K562 (cell line): ENCODE measurements at regions of chr14 and their contacts with region 1.

Region 1: DNA sequence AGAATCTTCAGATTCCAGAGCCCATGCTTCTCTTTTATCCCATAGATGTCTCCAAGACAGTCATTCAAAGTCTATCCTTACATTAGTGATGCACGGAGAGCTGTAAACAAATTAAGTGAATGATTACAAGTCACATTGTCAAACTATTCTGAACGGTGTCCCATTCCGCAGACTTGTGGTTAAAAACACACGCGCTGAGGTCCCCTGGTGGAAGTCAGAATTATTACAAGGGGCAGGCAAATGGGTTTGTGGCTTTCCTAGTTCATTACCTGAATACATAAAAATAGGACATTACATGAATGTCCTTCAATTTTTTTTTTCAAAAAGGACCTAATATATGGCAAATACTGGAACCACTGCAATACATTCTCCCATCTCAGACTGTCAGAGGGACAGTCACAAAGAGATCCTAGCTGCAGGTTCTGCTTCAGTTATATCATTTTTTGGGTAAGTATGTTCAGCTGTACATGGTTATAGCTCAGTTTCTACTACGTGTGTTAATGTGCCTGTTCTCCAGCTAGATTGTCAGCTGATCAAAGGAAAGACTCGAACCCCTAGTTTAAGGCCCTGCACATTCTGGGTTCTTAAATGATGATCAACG is 53.1 kb upstream of the STON2 start:
- DNase-seq: peak; percentile 38 to 70 (median 45)
- ATAC-seq: peak; percentile 82
- H3K4me3 ChIP-seq: no peak overlapping the region
- H3K27ac ChIP-seq: no peak overlapping the region
- H3K4me1 ChIP-seq: peaks cover 2 to 6% of the 10 kb centered on the region in 2 experiments; a peak in 4 of 5 replicates
- H3K27me3 ChIP-seq: no peaks in the 10 kb centered on the region
- CTCF ChIP-seq: peak; percentile 73 to 83 (median 80)
- EP300 ChIP-seq: no peak
- POLR2A ChIP-seq: no peak
- RAD21 ChIP-seq: peak; percentile 86 to 89

Region 2: GRCh38 chr14:81269100-81269978 is 183.9 kb before region 1 on chr14:
- CTCF ChIA-PET with region 1: interaction called, 32 read pairs
- POLR2A ChIA-PET with region 1: interaction called, 3 read pairs
- in situ Hi-C with region 1: loop called (anchors 5 kb)
- intact Hi-C with region 1: loop called (anchors 1 kb)
- DNase-seq: peak; percentile 61 to 62 (median 61)
- ATAC-seq: peak; percentile 89
- H3K4me3 ChIP-seq: no peak overlapping the region
- H3K27ac ChIP-seq: no peak overlapping the region
- H3K4me1 ChIP-seq: peaks cover 4 to 16% of the 10 kb centered on the region in 2 experiments; a peak in 3 of 5 replicates
- H3K27me3 ChIP-seq: no peaks in the 10 kb centered on the region
- CTCF ChIP-seq: peak; percentile 49 to 79 (median 60); a peak in 4 of 6 replicates
- EP300 ChIP-seq: no peak
- POLR2A ChIP-seq: no peak
- RAD21 ChIP-seq: peak; percentile 67 to 77

Region 3: DNA sequence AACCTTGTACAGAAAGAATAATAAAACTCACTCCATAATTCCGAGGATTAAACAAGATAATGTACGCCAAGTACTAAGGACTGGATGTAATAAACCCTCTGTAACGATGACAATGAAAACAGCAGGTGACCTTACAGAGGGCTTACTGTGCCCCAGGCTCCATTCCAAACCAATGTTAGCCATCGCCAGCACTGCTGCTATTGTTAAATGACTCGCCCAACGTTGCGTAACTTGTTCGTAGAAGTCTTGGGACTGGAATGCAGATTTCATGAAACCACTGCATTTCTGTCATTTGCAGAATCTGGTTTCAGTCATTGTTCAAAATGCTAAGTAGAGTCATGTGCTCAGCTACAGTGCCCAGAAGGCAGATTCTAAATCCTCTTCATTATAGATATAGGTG is 52.4 kb before region 1 on chr14:
- CTCF ChIA-PET with region 1: no interaction called
- POLR2A ChIA-PET with region 1: no interaction called
- in situ Hi-C with region 1: no loop called
- intact Hi-C with region 1: loop called (anchors 5 kb)
- DNase-seq: peak in 1 of 4 experiments; percentile 31
- ATAC-seq: 0 out of 3 replicates have a peak, but pooled peaks have one; percentile 6
- H3K4me3 ChIP-seq: no peak overlapping the region
- H3K27ac ChIP-seq: peak overlapping the region; percentile 81; the same call in 2 of the 3 replicates
- H3K4me1 ChIP-seq: peaks cover 4 to 42% of the 10 kb centered on the region in 2 experiments
- H3K27me3 ChIP-seq: no peaks in the 10 kb centered on the region
- CTCF ChIP-seq: no peak
- EP300 ChIP-seq: no peak
- POLR2A ChIP-seq: no peak
- RAD21 ChIP-seq: no peak

Region 4: GRCh38 chr14:81416194-81416952 is 36.9 kb before region 1 on chr14:
- CTCF ChIA-PET with region 1: no interaction called
- POLR2A ChIA-PET with region 1: no interaction called
- in situ Hi-C with region 1: no loop called
- intact Hi-C with region 1: loop called (anchors 5 kb)
- DNase-seq: peak in 2 of 4 experiments; percentile 23 to 62
- ATAC-seq: peak; percentile 86
- H3K4me3 ChIP-seq: no peak overlapping the region
- H3K27ac ChIP-seq: peak overlapping the region; percentile 75
- H3K4me1 ChIP-seq: peaks cover 13 to 23% of the 10 kb centered on the region in 2 experiments; a peak in 4 of 5 replicates
- H3K27me3 ChIP-seq: no peaks in the 10 kb centered on the region
- CTCF ChIP-seq: peak in 1 of 3 experiments; percentile 45; a peak in 1 of 6 replicates
- EP300 ChIP-seq: 0 out of 2 replicates have a peak, but pooled peaks have one; percentile 14
- POLR2A ChIP-seq: no peak
- RAD21 ChIP-seq: peak in 1 of 2 experiments; percentile 34; a peak in 2 of 4 replicates

Region 5: GRCh38 chr14:81435391-81436295 is 17.6 kb before region 1 on chr14:
- CTCF ChIA-PET with region 1: no interaction called
- POLR2A ChIA-PET with region 1: interaction called, 6 read pairs
- in situ Hi-C with region 1: no loop called
- intact Hi-C with region 1: loop called (anchors 2 kb)
- DNase-seq: peak; percentile 54 to 74 (median 72)
- ATAC-seq: peak; percentile 67
- H3K4me3 ChIP-seq: peak overlapping the region; percentile 59
- H3K27ac ChIP-seq: peak overlapping the region; percentile 69
- H3K4me1 ChIP-seq: peaks cover 20 to 41% of the 10 kb centered on the region in 2 experiments
- H3K27me3 ChIP-seq: no peaks in the 10 kb centered on the region
- CTCF ChIP-seq: peak in 1 of 3 experiments; percentile 14; a peak in 1 of 6 replicates
- EP300 ChIP-seq: no peak
- POLR2A ChIP-seq: no peak
- RAD21 ChIP-seq: no peak